ENCODE measurements at regions of chr3 and their contacts with region 1.

Region 1: GRCh38 chr3:156826144-156826895 is at the start of gene LEKR1:
- DNase-seq: peak; percentile 93 to 94
- H3K4me3 ChIP-seq: peak within 1 kb of the TSS; percentile 52
- H3K4me3 Mint-ChIP-seq: peak within 1 kb of the TSS; percentile 99
- H3K27ac Mint-ChIP-seq: peak within 1 kb of the TSS; percentile 100
- H3K4me1 ChIP-seq: peaks cover 21% of the 10 kb centered on the region
- H3K4me1 Mint-ChIP-seq: peaks cover 18% of the 10 kb centered on the region
- H3K27me3 ChIP-seq: no peaks in the 10 kb centered on the region
- H3K27me3 Mint-ChIP-seq: no peaks in the 10 kb centered on the region
- CTCF ChIP-seq: no peak
- total RNA-seq, gene LEKR1: 1.4 and 1.6 TPM in 2 replicates

Region 2: GRCh38 chr3:156627946-156628569 is 198.3 kb before region 1 on chr3:
- CTCF ChIA-PET with region 1: no interaction called
- POLR2A ChIA-PET with region 1: no interaction called
- intact Hi-C with region 1: loop called (anchors 2 kb)
- DNase-seq: peak in 1 of 2 experiments; percentile 46
- H3K4me3 ChIP-seq: no peak overlapping the region
- H3K4me3 Mint-ChIP-seq: peak overlapping the region; percentile 58
- H3K27ac Mint-ChIP-seq: peak overlapping the region; percentile 79
- H3K4me1 ChIP-seq: peaks cover 54% of the 10 kb centered on the region
- H3K4me1 Mint-ChIP-seq: peaks cover 28% of the 10 kb centered on the region
- H3K27me3 ChIP-seq: no peaks in the 10 kb centered on the region
- H3K27me3 Mint-ChIP-seq: no peaks in the 10 kb centered on the region
- CTCF ChIP-seq: no peak

Region 3: DNA sequence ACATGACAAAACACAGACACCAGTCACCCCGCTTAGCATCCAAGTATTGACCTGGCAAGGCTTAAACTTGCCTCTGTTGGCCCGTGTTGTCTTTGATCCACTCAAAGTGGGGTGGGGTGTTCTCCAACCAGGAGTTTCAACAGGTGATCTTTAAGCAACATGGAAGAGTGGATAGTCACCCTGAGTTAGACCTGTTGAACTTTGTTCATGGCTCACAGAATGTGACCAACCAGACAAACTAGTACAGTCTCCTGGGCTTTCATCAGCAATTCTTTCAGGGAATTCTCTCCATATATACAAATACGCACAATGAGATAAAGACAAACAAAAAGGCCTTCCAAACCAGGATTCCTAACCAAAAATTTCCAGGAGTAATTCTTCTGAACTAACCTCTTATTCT is 11.7 kb after region 1 on chr3:
- CTCF ChIA-PET with region 1: no interaction called
- POLR2A ChIA-PET with region 1: interaction called, 4 read pairs
- intact Hi-C with region 1: loop called (anchors 1 kb)
- DNase-seq: peak in 1 of 2 experiments; percentile 46
- H3K4me3 ChIP-seq: no peak overlapping the region
- H3K4me3 Mint-ChIP-seq: no peak overlapping the region
- H3K27ac Mint-ChIP-seq: peak overlapping the region; percentile 60
- H3K4me1 ChIP-seq: peaks cover 37% of the 10 kb centered on the region
- H3K4me1 Mint-ChIP-seq: peaks cover 21% of the 10 kb centered on the region
- H3K27me3 ChIP-seq: no peaks in the 10 kb centered on the region
- H3K27me3 Mint-ChIP-seq: no peaks in the 10 kb centered on the region
- CTCF ChIP-seq: no peak

Region 4: DNA sequence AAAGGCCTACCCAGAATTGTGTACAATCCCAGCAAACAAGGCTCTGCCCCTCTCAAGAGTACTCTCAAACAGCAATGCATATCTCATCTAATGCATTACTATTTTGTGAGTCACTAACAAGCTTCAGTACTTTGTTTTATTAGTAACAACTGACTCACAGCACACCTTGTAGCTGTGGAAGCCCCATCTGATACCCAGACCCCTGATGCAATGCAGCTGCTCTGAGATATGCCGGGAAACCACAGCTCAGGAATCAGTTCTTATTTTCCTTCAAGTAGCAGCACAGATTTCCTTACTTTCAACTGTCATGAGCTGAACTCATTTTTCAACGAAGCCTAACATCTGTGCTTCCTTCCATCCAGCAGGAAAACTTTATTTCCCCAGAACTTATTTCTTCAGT is 295.8 kb after region 1 on chr3:
- CTCF ChIA-PET with region 1: no interaction called
- POLR2A ChIA-PET with region 1: no interaction called
- intact Hi-C with region 1: loop called (anchors 2 kb)
- DNase-seq: no peak
- H3K4me3 ChIP-seq: no peak overlapping the region
- H3K4me3 Mint-ChIP-seq: peak overlapping the region; percentile 87
- H3K27ac Mint-ChIP-seq: peak overlapping the region; percentile 98
- H3K4me1 ChIP-seq: peaks cover 80% of the 10 kb centered on the region
- H3K4me1 Mint-ChIP-seq: peaks cover 55% of the 10 kb centered on the region
- H3K27me3 ChIP-seq: no peaks in the 10 kb centered on the region
- H3K27me3 Mint-ChIP-seq: no peaks in the 10 kb centered on the region
- CTCF ChIP-seq: no peak

Measured in Caco-2 (cell line).